Right ventricle myocardium inferior (tissue), 1 donor: ENCODE measurements at regions of chr21 and their contacts with region 1.

Region 1: GRCh38 chr21:33915368-33916199 is at the start of gene ATP5PO:
- DNase-seq: peak; percentile 99
- ATAC-seq: peak; percentile 100
- total RNA-seq, gene ATP5PO: 886 TPM

Region 2: DNA sequence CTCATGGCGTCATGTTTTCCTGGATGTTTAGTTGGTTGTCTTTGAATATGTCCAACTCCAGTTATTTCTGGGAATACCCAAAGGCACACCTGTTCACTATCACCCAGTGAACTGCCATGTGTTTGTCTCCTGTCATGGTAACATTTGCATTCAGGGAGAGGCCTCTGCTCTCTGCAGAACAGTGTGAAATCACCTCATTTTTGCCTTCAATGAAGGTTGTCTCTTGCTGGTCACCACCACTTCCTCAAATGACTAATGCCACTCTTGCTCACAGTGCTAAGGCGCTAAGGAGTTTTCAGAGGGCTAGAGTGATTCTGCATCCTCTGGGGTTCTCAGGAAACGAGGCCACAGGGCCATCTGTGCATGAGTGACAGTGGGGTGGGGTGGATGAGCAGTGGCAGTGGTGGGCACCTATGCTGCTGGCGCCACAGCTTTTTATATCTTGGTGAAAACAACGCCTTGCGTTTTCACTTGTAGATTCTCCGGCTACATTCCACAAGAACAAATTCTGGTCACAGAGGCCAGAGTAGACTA is 60.0 kb after region 1 on chr21:
- intact Hi-C with region 1: no loop called
- DNase-seq: no peak
- ATAC-seq: peak; percentile 45

Region 3: GRCh38 chr21:34126269-34126668 is 210.7 kb after region 1 on chr21:
- intact Hi-C with region 1: no loop called
- DNase-seq: no peak
- ATAC-seq: no peak

Region 4: GRCh38 chr21:34614633-34615486 is 699.3 kb after region 1 on chr21 and contains the start of gene RCAN1:
- intact Hi-C with region 1: loop called (anchors 10 kb)
- DNase-seq: peak; percentile 95
- ATAC-seq: peak; percentile 97
- total RNA-seq, gene RCAN1: 36.5 TPM